GM10248 (cell line): ENCODE measurements at regions of chr4 and their contacts with region 1.

Region 1: GRCh38 chr4:40316782-40317635 is 18.1 kb upstream of the CHRNA9 start:
- DNase-seq: peak; percentile 73
- CTCF ChIP-seq: peak; percentile 76

Region 2: GRCh38 chr4:40149960-40150385 is 167.0 kb before region 1 on chr4:
- CTCF ChIA-PET with region 1: interaction called, 25 read pairs
- POLR2A ChIA-PET with region 1: no interaction called
- DNase-seq: peak; percentile 66
- CTCF ChIP-seq: peak; percentile 82

Region 3: GRCh38 chr4:40205259-40206198 is 111.5 kb before region 1 on chr4:
- CTCF ChIA-PET with region 1: interaction called, 14 read pairs
- POLR2A ChIA-PET with region 1: interaction called, 8 read pairs
- DNase-seq: peak; percentile 51
- CTCF ChIP-seq: no peak

Region 4: DNA sequence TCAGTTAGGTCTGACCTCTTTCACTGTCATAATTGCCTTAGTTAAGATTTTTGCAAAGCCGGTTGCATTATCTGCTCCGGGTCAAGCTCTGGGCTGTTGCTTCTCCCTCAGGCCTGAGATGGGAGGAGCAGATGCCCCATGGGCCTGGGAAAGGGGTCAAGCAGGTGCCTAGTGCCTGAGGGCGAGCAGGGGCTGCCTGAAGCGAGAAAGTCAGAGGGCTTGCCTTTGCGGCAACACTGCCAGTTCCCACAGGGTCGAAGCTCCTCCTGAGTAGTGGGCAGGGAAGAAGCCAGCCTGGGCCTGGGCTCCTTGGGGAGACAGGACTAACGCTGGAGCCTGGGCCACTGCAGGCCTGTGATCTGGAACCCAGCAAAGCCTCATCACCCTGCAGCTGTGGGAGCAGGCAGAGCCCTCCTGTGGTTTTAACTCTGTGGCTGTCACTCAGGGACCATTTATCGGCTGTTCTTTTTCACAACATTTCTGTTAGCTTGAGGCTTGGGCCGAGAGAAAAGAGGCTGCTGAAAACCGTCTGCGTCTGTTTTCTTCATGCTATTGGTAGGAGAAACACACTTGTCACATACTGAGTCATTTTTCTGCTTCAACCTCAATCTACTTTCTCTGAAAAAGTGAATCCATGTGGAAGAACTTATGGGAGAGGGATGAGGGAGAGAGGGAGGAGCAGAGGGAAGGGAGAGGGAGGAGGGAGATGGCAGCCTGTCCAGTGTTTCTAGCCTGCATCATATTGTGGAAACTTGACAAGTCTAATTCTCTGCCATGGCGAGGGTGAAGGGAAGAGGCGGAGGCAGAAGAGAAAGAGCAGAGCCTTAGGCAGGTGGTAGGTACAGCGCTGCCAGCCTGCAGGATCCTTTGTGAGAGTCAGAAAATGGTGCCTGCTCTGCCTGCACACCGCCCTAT is 51.8 kb before region 1 on chr4:
- CTCF ChIA-PET with region 1: no interaction called
- POLR2A ChIA-PET with region 1: no interaction called
- DNase-seq: no peak
- CTCF ChIP-seq: no peak

Region 5: GRCh38 chr4:40289366-40290188 is 27.4 kb before region 1 on chr4:
- CTCF ChIA-PET with region 1: interaction called, 13 read pairs
- POLR2A ChIA-PET with region 1: no interaction called
- DNase-seq: no peak
- CTCF ChIP-seq: no peak